Activated CD4-positive, alpha-beta T cell treated with anti-CD3 and anti-CD28 coated beads, Interleukin-2, amount 10 ng/mL, durations not matched to agents 24 days and 14 days (primary cell): ENCODE measurements at regions of chr7 and their contacts with region 1.

Region 1: GRCh38 chr7:107661081-107661864 is 645 bp downstream of the SLC26A4 start:
- DNase-seq: peak; percentile 90
- H3K4me3 Mint-ChIP-seq: peak overlapping the region; percentile 97
- H3K27ac Mint-ChIP-seq: peak overlapping the region; percentile 90
- H3K4me1 Mint-ChIP-seq: peaks cover 41% of the 10 kb centered on the region
- H3K27me3 Mint-ChIP-seq: no peaks in the 10 kb centered on the region

Region 2: DNA sequence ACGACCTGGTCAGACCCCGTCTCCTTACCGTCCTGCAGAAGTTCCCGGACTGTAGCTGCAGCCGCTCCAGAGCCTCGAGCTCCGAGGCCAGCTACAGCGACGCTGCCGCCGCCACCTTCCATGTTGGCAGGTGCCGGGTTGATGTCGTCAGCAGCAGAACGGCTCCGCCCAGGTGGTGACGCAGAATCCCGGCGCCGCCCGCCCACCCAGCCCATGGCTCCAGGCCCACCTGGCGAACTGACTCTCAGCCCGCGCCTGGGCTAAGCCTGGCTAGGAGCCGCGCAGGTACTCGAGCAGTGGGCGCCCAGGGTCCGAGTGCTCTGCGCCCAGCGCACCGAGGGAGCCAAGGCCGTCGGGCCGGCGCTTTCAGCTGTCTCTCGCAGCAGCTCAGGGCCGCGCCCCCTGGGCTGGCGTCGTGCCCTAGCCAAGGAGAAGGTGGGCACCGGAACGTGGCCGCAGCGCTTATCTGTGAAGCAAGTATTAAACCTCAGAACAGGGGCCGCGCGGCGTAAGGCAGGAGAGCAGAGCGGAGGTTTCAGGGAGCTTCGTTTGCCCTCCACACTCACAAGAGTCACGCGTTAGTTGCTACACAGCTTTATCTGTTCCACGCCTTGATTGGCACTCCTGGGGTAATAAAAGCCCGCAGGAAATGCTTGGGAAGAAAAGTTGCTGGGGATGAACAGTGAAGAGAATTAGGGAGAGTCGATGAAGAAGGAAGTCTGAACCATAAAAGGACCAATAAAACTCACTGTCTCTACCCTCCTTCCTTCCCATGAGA is 97.3 kb before region 1 on chr7 and contains the starts of genes COG5 and DUS4L:
- intact Hi-C with region 1: loop called (anchors 1 kb)
- DNase-seq: peak; percentile 95
- H3K4me3 Mint-ChIP-seq: peak within 1 kb of the TSS; percentile 85
- H3K27ac Mint-ChIP-seq: peak within 1 kb of the TSS; percentile 85
- H3K4me1 Mint-ChIP-seq: peaks cover 50% of the 10 kb centered on the region
- H3K27me3 Mint-ChIP-seq: no peaks in the 10 kb centered on the region
- total RNA-seq, gene COG5: 40.9 and 43.3 TPM in 2 replicates
- total RNA-seq, gene DUS4L: 12.9 and 14.9 TPM in 2 replicates

Region 3: GRCh38 chr7:107622429-107622828 is 38.8 kb before region 1 on chr7:
- intact Hi-C with region 1: loop called (anchors 5 kb)
- DNase-seq: no peak
- H3K4me3 Mint-ChIP-seq: no peak overlapping the region
- H3K27ac Mint-ChIP-seq: no peak overlapping the region
- H3K4me1 Mint-ChIP-seq: no peaks in the 10 kb centered on the region
- H3K27me3 Mint-ChIP-seq: no peaks in the 10 kb centered on the region

Region 4: GRCh38 chr7:107644309-107644974 is 16.8 kb before region 1 on chr7:
- intact Hi-C with region 1: no loop called
- DNase-seq: no peak
- H3K4me3 Mint-ChIP-seq: peak overlapping the region; percentile 1
- H3K27ac Mint-ChIP-seq: no peak overlapping the region
- H3K4me1 Mint-ChIP-seq: peaks cover 20% of the 10 kb centered on the region
- H3K27me3 Mint-ChIP-seq: peaks cover 3% of the 10 kb centered on the region

Region 5: DNA sequence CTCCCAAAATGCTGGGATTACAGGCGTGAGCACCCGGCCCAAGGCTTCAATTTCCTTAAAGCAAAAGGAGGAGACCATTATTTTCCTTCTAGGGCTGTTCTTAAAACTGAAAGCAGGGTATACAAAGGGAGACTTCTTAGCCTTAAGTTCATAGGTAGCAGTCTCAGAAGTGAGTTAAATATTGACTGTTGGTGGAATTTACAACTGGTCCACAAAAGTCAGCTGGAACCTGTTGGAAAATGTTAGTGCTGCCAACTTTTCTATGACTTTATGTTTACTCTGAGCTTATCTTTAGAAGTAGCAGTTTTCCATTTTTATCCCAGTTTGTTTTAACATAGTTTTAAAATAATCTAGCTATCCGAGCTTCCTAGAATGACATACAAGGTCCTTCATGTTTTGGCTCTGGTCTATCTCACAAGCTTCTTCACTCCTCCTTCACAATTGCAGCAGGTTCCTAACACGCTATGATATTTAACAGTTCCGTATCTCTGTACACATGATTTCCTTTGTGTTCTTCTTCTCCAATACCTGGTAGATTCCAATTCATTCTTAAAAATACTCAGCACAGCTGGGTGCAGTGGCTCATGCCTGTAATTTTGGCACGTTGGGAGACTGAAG is 138.5 kb after region 1 on chr7:
- intact Hi-C with region 1: no loop called
- DNase-seq: no peak
- H3K4me3 Mint-ChIP-seq: no peak overlapping the region
- H3K27ac Mint-ChIP-seq: no peak overlapping the region
- H3K4me1 Mint-ChIP-seq: no peaks in the 10 kb centered on the region
- H3K27me3 Mint-ChIP-seq: peaks cover 13% of the 10 kb centered on the region

Region 6: DNA sequence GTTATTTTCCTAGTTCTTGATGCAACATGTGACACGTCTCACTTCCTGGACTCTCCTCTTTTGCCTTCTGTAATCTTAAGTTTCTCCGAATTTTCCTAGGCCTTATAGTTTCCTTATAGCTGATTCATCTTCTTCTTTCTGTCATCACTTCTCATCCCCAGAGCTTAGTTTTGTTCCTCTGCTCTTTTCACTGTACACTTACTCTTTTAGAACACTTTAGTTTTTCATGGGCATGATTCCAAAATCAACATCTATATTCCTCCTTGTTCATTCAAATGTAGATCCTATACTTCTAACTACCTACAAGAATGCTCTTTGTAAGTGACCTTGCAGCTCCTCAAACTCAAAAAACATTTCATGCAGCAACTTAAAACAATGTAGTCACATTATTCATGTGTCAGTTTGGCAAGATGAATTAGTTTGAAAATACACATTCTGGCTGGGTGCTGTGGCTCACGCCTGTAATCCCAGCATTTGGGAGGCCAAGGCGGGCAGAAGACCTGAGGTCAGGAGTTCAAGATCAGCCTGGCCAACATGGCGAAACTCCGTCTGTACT is 154.8 kb after region 1 on chr7:
- intact Hi-C with region 1: loop called (anchors 10 kb)
- DNase-seq: no peak
- H3K4me3 Mint-ChIP-seq: peak overlapping the region; percentile 23
- H3K27ac Mint-ChIP-seq: peak overlapping the region; percentile 84
- H3K4me1 Mint-ChIP-seq: peaks cover 23% of the 10 kb centered on the region
- H3K27me3 Mint-ChIP-seq: peaks cover 3% of the 10 kb centered on the region

Region 7: DNA sequence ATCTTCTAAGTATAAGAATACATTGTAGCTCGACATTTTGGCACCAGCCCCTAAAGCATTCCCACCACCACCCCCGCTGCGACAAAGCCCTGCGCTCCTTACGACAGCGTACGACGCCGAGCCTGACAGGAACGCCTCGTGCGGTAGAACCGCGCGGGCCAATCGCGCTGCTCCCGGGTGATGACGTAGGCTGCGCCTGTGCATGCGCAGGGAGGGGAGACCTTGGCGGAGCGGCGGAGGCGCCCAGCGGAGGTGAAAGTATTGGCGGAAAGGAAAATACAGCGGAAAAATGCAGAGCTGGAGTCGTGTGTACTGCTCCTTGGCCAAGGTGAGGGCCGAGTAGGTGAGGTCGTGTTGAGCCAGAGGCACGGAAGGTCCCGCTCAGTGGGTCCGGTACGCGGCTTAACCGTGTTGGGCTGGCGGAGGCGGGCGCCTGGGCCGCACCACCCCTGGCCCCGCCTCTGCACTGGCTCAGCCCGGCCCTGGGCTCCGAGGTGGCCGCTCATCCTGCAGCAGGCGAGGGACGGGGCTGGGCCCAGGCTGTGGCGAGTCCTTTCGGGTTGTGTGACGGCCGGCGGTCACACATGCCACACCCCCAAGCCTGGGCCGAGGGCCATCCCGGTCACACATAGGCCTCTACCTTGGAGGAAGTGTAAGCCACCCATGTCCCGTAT is 229.8 kb after region 1 on chr7 and contains the start of gene DLD:
- intact Hi-C with region 1: loop called (anchors 5 kb)
- DNase-seq: peak; percentile 99
- H3K4me3 Mint-ChIP-seq: peak within 1 kb of the TSS; percentile 100
- H3K27ac Mint-ChIP-seq: peak within 1 kb of the TSS; percentile 99
- H3K4me1 Mint-ChIP-seq: peaks cover 41% of the 10 kb centered on the region
- H3K27me3 Mint-ChIP-seq: peaks cover 2% of the 10 kb centered on the region
- total RNA-seq, gene DLD: 113 and 119 TPM in 2 replicates